PC-9 (cell line): ENCODE measurements at regions of chr9 and their contacts with region 1.

Region 1: GRCh38 chr9:106799146-106799545 is 63.8 kb upstream of the ZNF462 start:
- DNase-seq: peak in 1 of 2 experiments; percentile 71
- H3K4me3 ChIP-seq: no peak overlapping the region
- H3K27ac ChIP-seq: no peak overlapping the region
- H3K4me1 ChIP-seq: peaks cover 19% of the 10 kb centered on the region
- H3K27me3 ChIP-seq: no peaks in the 10 kb centered on the region
- CTCF ChIP-seq: no peak

Region 2: DNA sequence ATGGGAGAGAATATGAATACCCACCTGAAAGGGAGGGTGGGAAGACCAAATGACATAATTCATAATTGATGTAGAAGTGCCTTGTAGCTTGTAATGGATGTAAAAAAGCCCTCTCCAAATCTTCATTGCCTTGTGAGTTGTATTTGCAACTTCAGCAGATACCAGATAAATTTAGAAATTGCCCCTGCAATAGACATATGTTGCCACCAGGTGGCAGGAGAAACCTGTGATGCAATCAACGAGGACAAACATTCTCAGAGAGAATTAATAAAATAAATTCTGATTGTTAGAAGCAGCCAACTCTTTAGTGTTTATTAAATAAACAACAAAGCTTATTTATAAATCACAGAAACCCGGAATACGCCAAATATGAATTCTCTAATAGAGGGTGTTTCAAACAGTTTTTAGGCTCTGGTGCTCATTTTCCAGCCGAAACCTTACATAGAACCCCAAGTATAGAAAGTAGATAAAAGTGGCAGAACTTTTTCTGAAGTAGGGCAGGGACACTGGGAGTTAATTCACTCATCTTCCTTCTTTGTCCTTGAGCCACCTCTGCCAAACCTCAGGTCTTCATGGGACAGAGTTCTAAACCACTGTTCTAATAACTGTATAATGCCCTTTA is 957.0 kb before region 1 on chr9:
- CTCF ChIA-PET with region 1: interaction called, 10 read pairs
- POLR2A ChIA-PET with region 1: no interaction called
- intact Hi-C with region 1: no loop called
- DNase-seq: peak; percentile 29 to 36
- H3K4me3 ChIP-seq: no peak overlapping the region
- H3K27ac ChIP-seq: no peak overlapping the region
- H3K4me1 ChIP-seq: no peaks in the 10 kb centered on the region
- H3K27me3 ChIP-seq: no peaks in the 10 kb centered on the region
- CTCF ChIP-seq: peak; percentile 97

Region 3: DNA sequence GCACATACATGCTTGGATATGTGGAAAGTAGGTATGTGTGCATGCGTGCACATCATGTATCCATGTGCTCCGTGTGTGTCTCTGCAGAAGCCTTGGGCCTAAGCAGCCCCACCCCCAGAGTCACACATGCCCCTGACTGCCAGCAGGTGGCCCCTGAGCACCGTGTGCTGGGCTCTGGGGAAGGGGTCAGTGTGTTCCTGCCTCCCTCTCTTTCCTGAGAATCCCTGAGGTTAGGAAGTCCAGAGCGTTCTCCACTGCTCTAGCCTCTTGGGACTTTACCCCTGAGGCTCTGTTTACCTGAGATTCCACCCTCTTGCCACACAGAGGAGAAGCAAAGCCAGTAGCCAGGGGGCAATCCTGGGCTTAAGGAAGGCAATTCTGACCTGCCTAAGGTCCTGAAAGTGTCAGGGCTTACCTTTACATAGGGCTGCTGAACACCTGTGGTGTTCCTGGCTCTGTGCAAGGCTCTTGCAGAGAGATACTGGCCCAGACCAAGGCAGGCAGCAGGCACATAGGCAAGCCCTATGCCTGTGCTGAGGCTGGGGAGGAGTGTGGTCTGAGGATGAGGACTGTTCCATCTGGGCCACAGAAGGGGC is 897.5 kb before region 1 on chr9:
- CTCF ChIA-PET with region 1: no interaction called
- POLR2A ChIA-PET with region 1: no interaction called
- intact Hi-C with region 1: loop called (anchors 5 kb)
- DNase-seq: peak; percentile 57 to 73
- H3K4me3 ChIP-seq: no peak overlapping the region
- H3K27ac ChIP-seq: no peak overlapping the region
- H3K4me1 ChIP-seq: peaks cover 12% of the 10 kb centered on the region
- H3K27me3 ChIP-seq: no peaks in the 10 kb centered on the region
- CTCF ChIP-seq: peak; percentile 90

Region 4: DNA sequence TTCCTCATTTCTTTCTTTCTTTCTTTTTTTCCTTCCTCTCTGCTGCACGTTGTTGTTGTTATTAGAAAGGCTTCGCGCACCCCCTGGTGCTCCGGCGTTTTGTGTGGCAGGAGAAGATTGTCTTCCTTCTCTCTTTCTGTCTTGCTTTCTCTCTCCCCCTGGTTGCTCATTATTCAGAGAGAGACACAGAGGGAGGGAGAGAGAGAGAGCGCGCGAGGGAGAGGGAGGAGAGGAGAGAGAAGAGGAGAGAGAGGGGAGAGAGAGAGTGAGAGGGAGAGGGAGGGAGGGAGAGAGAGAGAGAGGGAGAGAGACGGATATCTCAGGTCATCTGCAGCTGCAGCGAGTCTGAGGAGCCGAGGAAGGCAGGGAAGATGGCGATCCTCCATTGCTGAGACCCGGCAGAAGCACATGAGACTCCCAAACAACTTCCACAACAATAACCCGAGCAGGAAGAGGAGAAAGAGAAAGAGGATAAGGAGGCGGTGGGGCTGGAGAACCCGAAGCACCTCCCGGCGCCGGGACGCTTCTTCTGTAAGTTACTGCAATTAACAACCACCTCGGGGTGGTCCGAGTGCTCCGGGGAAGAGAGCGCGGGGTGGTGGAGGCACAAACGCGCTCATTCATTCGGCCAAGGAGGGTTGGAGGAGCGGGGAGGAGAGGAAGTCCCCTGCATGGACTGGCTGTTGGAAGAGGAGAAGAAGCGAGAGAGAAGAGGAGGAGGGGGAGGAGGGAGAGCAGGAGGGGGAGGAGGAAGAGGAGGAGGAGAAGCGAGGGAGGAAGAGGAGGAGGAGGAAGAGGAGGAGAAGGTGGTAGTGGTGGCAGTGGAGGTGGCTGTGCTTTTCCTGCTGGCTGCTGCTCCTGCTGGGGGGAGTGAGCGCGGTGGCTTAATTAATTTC is 63.9 kb after region 1 on chr9 and contains the start of gene ZNF462:
- CTCF ChIA-PET with region 1: no interaction called
- POLR2A ChIA-PET with region 1: interaction called, 18 read pairs
- intact Hi-C with region 1: loop called (anchors 5 kb)
- DNase-seq: peak in 1 of 2 experiments; percentile 26
- H3K4me3 ChIP-seq: peak within 1 kb of the TSS; percentile 97
- H3K27ac ChIP-seq: no peak within 1 kb of the TSS
- H3K4me1 ChIP-seq: peaks cover 5% of the 10 kb centered on the region; the same call in 1 of the 2 replicates
- H3K27me3 ChIP-seq: no peaks in the 10 kb centered on the region
- CTCF ChIP-seq: peak; percentile 56
- total RNA-seq, gene ZNF462: 3.2 and 4.8 TPM in 2 replicates